OCI-LY7 (cell line): ENCODE measurements at regions of chr3 and their contacts with region 1.

Region 1: GRCh38 chr3:174408310-174408709 is 450.8 kb upstream of the NAALADL2 start:
- DNase-seq: no peak
- H3K4me3 ChIP-seq: no peak overlapping the region
- H3K27ac ChIP-seq: no peak overlapping the region
- H3K4me1 ChIP-seq: no peaks in the 10 kb centered on the region
- CTCF ChIP-seq: no peak

Region 2: DNA sequence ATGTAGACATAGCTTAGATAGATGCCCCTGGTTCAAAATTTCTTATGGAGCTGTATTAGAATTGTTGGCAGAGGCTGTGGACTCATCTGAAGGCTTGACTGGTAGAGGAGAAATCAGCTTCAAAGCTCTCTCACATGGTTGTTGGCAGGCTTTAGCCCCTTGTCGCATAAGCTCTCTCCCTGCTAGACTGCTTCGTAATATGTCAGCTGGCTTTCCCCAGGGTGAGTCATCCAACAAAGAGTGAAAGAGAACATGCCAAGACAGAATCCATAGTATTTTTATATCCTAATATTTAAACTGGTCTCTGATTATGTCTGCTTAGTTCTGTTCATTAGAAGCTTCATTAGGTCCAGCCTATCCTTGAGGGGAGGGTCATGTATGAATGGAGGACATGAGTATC is 23.4 kb after region 1 on chr3:
- CTCF ChIA-PET with region 1: no interaction called
- POLR2A ChIA-PET with region 1: interaction called, 10 read pairs
- intact Hi-C with region 1: no loop called
- DNase-seq: no peak
- H3K4me3 ChIP-seq: no peak overlapping the region
- H3K27ac ChIP-seq: no peak overlapping the region
- H3K4me1 ChIP-seq: no peaks in the 10 kb centered on the region
- CTCF ChIP-seq: no peak

Region 3: GRCh38 chr3:174488527-174488926 is 80.2 kb after region 1 on chr3:
- CTCF ChIA-PET with region 1: no interaction called
- POLR2A ChIA-PET with region 1: no interaction called
- intact Hi-C with region 1: no loop called
- DNase-seq: no peak
- H3K4me3 ChIP-seq: no peak overlapping the region
- H3K27ac ChIP-seq: no peak overlapping the region
- H3K4me1 ChIP-seq: no peaks in the 10 kb centered on the region
- CTCF ChIP-seq: no peak